GM10248 (cell line): ENCODE measurements at regions of chr11 and their contacts with region 1.

Region 1: DNA sequence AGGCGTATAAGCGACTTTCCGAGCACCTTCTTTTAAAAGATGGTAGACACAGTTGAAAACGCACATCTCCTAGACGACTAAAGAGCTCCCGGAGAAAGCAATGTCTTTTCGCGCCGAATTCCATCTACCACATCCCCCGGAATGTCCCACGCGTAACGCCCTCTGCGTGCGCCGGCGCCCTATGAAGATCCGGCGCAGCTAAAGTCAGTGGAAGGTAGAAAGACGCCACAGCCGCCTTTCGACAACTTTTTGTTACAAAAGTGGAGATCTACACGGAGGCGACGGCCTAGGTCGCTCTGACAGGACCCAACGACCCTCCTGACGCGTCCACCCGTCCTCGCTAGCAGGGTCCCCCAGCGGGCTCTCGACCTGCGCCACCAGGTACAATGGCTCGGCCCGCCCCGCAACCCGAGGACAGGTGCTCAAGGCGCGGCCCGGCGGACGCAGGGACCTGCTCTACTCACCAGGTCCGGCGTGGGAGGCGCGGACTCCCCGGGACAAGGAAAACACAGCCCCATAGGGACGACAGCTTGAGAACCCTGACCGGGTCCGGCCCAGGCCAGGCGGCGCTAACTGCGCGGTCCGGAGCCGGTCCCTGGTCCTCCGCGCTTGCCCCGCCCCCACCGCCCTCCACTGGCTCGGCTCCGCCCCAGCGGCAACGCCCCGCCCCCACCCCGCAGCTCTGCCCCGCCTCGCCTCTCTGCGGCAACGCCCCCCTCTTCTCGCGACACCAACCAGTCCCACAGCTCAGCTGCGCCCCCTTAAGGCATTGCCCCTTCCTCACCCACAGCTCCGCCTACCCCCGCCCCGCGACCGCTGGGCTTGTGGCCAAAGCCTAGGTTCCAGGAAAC is at the start of gene SVIP:
- DNase-seq: peak; percentile 93
- CTCF ChIP-seq: peak; percentile 95

Region 2: GRCh38 chr11:22666688-22667439 is 162.6 kb before region 1 on chr11:
- CTCF ChIA-PET with region 1: interaction called, 11 read pairs
- POLR2A ChIA-PET with region 1: no interaction called
- DNase-seq: peak; percentile 62
- CTCF ChIP-seq: no peak

Region 3: DNA sequence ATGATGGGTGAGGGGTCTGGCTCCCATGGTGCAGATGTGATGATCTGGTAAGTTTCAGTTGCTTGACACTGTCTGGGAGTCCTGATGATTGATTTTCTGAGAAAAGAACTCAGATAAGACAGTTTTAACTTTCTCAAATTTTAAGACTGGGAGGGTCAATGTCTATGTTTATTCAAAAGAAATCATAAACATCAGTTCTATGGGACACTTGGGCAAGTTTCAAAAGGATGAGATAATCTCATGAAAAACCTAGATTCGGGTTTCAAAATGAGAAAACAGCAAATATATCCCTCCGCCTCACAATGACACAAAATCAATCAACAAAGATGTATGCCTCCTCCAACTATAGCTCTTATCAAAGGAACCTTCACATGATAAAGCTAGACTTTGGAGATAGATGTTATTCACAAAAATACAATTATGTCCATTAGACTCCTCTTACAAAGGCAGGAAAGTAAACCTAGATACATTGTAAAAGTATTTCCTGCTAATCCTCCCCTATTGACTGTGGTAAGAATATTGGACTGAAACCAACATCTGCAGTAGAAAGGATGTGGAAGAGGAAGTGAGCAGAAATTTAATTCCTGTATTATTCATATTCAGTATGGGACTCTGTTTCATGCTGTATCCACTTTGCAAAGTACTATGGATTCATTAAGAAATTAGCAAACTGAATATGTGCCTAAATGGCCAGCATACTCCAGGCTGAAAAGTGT is 21.4 kb before region 1 on chr11:
- CTCF ChIA-PET with region 1: interaction called, 26 read pairs
- POLR2A ChIA-PET with region 1: interaction called, 6 read pairs
- DNase-seq: peak; percentile 14
- CTCF ChIP-seq: no peak

Region 4: GRCh38 chr11:22851477-22851876 is 22.0 kb after region 1 on chr11:
- CTCF ChIA-PET with region 1: interaction called, 16 read pairs
- POLR2A ChIA-PET with region 1: no interaction called
- DNase-seq: no peak
- CTCF ChIP-seq: no peak

Region 5: GRCh38 chr11:22930816-22931594 is 101.5 kb after region 1 on chr11:
- CTCF ChIA-PET with region 1: no interaction called
- POLR2A ChIA-PET with region 1: no interaction called
- DNase-seq: no peak
- CTCF ChIP-seq: no peak

Region 6: GRCh38 chr11:22984045-22984444 is 154.6 kb after region 1 on chr11:
- CTCF ChIA-PET with region 1: no interaction called
- POLR2A ChIA-PET with region 1: no interaction called
- DNase-seq: no peak
- CTCF ChIP-seq: no peak